CD4-positive, alpha-beta T cell (primary cell): ENCODE measurements at regions of chr16 and their contacts with region 1.

Region 1: GRCh38 chr16:56931892-56932720 is at the start of gene HERPUD1:
- DNase-seq: peak; percentile 98 to 100 (median 99)
- ATAC-seq: peak; percentile 96
- H3K4me3 ChIP-seq: peak within 1 kb of the TSS; percentile 99
- H3K4me3 Mint-ChIP-seq: peak within 1 kb of the TSS; percentile 99
- H3K27ac ChIP-seq: peak within 1 kb of the TSS; percentile 81 to 93
- H3K27ac Mint-ChIP-seq: peak within 1 kb of the TSS; percentile 96
- H3K4me1 ChIP-seq: peaks cover 28% of the 10 kb centered on the region
- H3K4me1 Mint-ChIP-seq: peaks cover 39% of the 10 kb centered on the region
- H3K27me3 ChIP-seq: no peaks in the 10 kb centered on the region
- H3K27me3 Mint-ChIP-seq: no peaks in the 10 kb centered on the region
- CTCF ChIP-seq: peak; percentile 27
- total RNA-seq, gene HERPUD1: 217 to 227 TPM

Region 2: DNA sequence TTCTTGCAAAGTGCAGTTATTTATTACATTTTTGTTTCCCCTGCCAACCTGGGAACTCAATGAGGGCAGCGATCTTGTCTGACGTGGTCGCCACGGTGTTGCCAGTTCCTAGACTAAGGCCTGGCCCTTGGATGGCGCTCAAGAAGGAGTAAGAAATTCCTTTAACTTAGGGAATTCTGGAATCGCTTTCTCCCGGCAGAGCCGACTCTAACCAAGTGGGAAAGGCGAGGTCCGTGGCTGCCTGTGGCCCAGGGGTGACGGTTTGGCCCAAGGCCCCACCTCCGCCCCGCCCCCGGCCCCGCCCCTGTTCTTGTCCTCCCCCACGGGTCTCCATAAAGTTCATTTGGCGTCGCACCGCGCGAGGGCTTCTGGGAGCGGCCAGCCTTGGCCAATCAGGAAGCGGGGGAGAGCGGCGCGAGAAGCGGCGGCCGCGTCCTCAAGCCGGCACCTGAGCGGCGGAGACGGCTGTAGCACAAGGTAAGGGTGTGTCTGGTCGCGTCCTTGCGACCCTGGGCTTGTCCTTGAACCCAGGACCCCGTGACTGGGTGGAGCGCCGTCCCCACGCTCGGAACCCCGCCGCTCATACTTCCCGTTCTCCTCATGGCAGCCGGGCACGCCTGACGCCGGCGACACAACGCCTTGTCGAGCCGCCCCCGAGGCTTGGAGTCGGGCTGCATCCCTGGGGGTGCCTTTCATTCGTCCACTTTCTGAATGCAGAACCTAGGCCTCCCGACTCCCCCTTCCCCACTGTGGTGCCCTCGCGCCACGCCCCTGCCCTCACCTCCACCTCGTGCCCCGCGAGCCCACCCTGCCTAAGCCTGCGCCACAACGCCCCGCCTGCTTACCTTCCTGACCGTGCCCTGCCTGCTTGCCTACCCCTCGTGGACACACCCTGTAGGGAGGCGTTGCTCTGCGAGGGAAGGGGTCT is 202.1 kb before region 1 on chr16 and contains the start of gene NUP93:
- CTCF ChIA-PET with region 1: no interaction called
- POLR2A ChIA-PET with region 1: no interaction called
- intact Hi-C with region 1: loop called in 1 of 2 experiments (anchors 10 kb)
- DNase-seq: peak; percentile 81 to 96 (median 87)
- ATAC-seq: peak; percentile 93
- H3K4me3 ChIP-seq: peak within 1 kb of the TSS; percentile 99
- H3K4me3 Mint-ChIP-seq: no peak within 1 kb of the TSS
- H3K27ac ChIP-seq: peak within 1 kb of the TSS; percentile 44 to 57
- H3K27ac Mint-ChIP-seq: peak within 1 kb of the TSS; percentile 93
- H3K4me1 ChIP-seq: peaks cover 26% of the 10 kb centered on the region
- H3K4me1 Mint-ChIP-seq: peaks cover 34% of the 10 kb centered on the region
- H3K27me3 ChIP-seq: no peaks in the 10 kb centered on the region
- H3K27me3 Mint-ChIP-seq: no peaks in the 10 kb centered on the region
- CTCF ChIP-seq: no peak
- total RNA-seq, gene NUP93: 45.6 to 47.2 TPM

Region 3: GRCh38 chr16:56888806-56889205 is 43.3 kb before region 1 on chr16:
- CTCF ChIA-PET with region 1: no interaction called
- POLR2A ChIA-PET with region 1: no interaction called
- intact Hi-C with region 1: no loop called
- DNase-seq: peak in 2 of 14 experiments; percentile 47 to 52
- ATAC-seq: no peak
- H3K4me3 ChIP-seq: no peak overlapping the region
- H3K4me3 Mint-ChIP-seq: no peak overlapping the region
- H3K27ac ChIP-seq: no peak overlapping the region
- H3K27ac Mint-ChIP-seq: no peak overlapping the region
- H3K4me1 ChIP-seq: no peaks in the 10 kb centered on the region
- H3K4me1 Mint-ChIP-seq: no peaks in the 10 kb centered on the region
- H3K27me3 ChIP-seq: no peaks in the 10 kb centered on the region
- H3K27me3 Mint-ChIP-seq: no peaks in the 10 kb centered on the region
- CTCF ChIP-seq: no peak

Region 4: GRCh38 chr16:56919099-56919800 is 12.9 kb before region 1 on chr16:
- CTCF ChIA-PET with region 1: no interaction called
- POLR2A ChIA-PET with region 1: interaction called, 20 read pairs
- intact Hi-C with region 1: no loop called
- DNase-seq: no peak
- ATAC-seq: no peak
- H3K4me3 ChIP-seq: no peak overlapping the region
- H3K4me3 Mint-ChIP-seq: no peak overlapping the region
- H3K27ac ChIP-seq: no peak overlapping the region
- H3K27ac Mint-ChIP-seq: no peak overlapping the region
- H3K4me1 ChIP-seq: peaks cover 21% of the 10 kb centered on the region
- H3K4me1 Mint-ChIP-seq: peaks cover 13% of the 10 kb centered on the region
- H3K27me3 ChIP-seq: no peaks in the 10 kb centered on the region
- H3K27me3 Mint-ChIP-seq: no peaks in the 10 kb centered on the region
- CTCF ChIP-seq: no peak

Region 5: GRCh38 chr16:57244767-57245471 is 312.8 kb after region 1 on chr16 and contains the start of gene ARL2BP:
- CTCF ChIA-PET with region 1: no interaction called
- POLR2A ChIA-PET with region 1: no interaction called
- intact Hi-C with region 1: loop called in 1 of 2 experiments (anchors 5 kb)
- DNase-seq: peak; percentile 93 to 98 (median 97)
- ATAC-seq: peak; percentile 94
- H3K4me3 ChIP-seq: peak within 1 kb of the TSS; percentile 64
- H3K4me3 Mint-ChIP-seq: peak within 1 kb of the TSS; percentile 89
- H3K27ac ChIP-seq: peak within 1 kb of the TSS; percentile 63 to 68
- H3K27ac Mint-ChIP-seq: peak within 1 kb of the TSS; percentile 86
- H3K4me1 ChIP-seq: peaks cover 19% of the 10 kb centered on the region
- H3K4me1 Mint-ChIP-seq: peaks cover 21% of the 10 kb centered on the region
- H3K27me3 ChIP-seq: no peaks in the 10 kb centered on the region
- H3K27me3 Mint-ChIP-seq: no peaks in the 10 kb centered on the region
- CTCF ChIP-seq: peak; percentile 53
- total RNA-seq, gene ARL2BP: 32.4 to 35.6 TPM

Region 6: GRCh38 chr16:57394444-57394843 is 462.3 kb after region 1 on chr16:
- CTCF ChIA-PET with region 1: no interaction called
- POLR2A ChIA-PET with region 1: no interaction called
- intact Hi-C with region 1: no loop called
- DNase-seq: no peak
- ATAC-seq: no peak
- H3K4me3 ChIP-seq: no peak overlapping the region
- H3K4me3 Mint-ChIP-seq: no peak overlapping the region
- H3K27ac ChIP-seq: no peak overlapping the region
- H3K27ac Mint-ChIP-seq: no peak overlapping the region
- H3K4me1 ChIP-seq: no peaks in the 10 kb centered on the region
- H3K4me1 Mint-ChIP-seq: no peaks in the 10 kb centered on the region
- H3K27me3 ChIP-seq: no peaks in the 10 kb centered on the region
- H3K27me3 Mint-ChIP-seq: peaks cover 6% of the 10 kb centered on the region
- CTCF ChIP-seq: no peak

Region 7: GRCh38 chr16:57535680-57536305 is 603.7 kb after region 1 on chr16:
- CTCF ChIA-PET with region 1: no interaction called
- POLR2A ChIA-PET with region 1: no interaction called
- intact Hi-C with region 1: loop called in 1 of 2 experiments (anchors 2 kb)
- DNase-seq: peak; percentile 87 to 98 (median 91)
- ATAC-seq: peak; percentile 85
- H3K4me3 ChIP-seq: peak overlapping the region; percentile 59
- H3K4me3 Mint-ChIP-seq: peak overlapping the region; percentile 89
- H3K27ac ChIP-seq: peak overlapping the region; percentile 94
- H3K27ac Mint-ChIP-seq: peak overlapping the region; percentile 96
- H3K4me1 ChIP-seq: peaks cover 79% of the 10 kb centered on the region
- H3K4me1 Mint-ChIP-seq: peaks cover 78% of the 10 kb centered on the region
- H3K27me3 ChIP-seq: no peaks in the 10 kb centered on the region
- H3K27me3 Mint-ChIP-seq: no peaks in the 10 kb centered on the region
- CTCF ChIP-seq: no peak